ENCODE measurements at regions of chr21 and their contacts with region 1.

Region 1: GRCh38 chr21:15729674-15730483 is at the start of gene USP25:
- DNase-seq: peak; percentile 87
- H3K4me3 Mint-ChIP-seq: peak within 1 kb of the TSS; percentile 90
- H3K27ac Mint-ChIP-seq: peak within 1 kb of the TSS; percentile 92
- H3K4me1 Mint-ChIP-seq: peaks cover 11% of the 10 kb centered on the region
- H3K27me3 Mint-ChIP-seq: no peaks in the 10 kb centered on the region
- CTCF ChIP-seq: no peak
- total RNA-seq, gene USP25: 78.5 and 90.8 TPM in 2 replicates

Region 2: DNA sequence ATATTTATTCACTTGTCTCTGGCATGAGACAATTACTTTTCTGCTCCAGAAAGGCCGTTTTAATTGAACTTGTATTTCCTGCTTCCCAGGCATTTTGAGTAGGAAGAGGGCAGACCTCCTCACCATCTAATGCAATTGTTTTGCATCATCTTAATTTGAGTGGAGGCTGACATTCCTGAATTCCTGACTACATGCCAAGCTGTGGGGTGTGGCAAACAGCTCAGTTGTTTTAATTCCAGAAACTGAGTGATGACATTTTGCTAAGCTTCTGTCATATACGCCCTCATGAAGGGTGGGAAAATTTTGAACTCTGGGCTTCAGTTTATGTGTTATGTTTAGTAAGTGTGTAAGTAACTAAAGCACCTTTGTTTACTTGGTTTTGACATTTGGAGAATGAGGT is 125.5 kb before region 1 on chr21:
- CTCF ChIA-PET with region 1: interaction called, 4 read pairs
- POLR2A ChIA-PET with region 1: no interaction called
- intact Hi-C with region 1: loop called (anchors 2 kb)
- DNase-seq: peak; percentile 91
- H3K4me3 Mint-ChIP-seq: no peak overlapping the region
- H3K27ac Mint-ChIP-seq: peak overlapping the region; percentile 82
- H3K4me1 Mint-ChIP-seq: peaks cover 11% of the 10 kb centered on the region
- H3K27me3 Mint-ChIP-seq: no peaks in the 10 kb centered on the region
- CTCF ChIP-seq: no peak

Region 3: DNA sequence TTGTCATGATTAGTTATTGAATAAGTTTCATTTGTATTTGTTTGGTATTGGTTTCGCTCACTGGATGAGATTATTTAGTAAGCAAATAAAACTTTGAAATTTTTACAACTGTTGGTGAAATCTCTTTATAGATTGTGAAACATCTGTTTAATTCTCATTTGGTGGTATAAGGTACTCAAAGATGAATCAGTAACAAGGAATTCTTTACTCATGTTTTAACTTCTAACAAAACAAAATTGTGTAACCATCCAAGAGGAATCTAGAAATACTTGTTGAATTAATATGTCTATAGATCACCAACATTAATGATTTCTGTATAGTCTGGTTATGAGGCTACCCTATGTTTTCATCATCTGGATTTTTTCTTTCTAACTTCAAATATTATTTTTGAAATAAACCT is 62.9 kb before region 1 on chr21:
- CTCF ChIA-PET with region 1: no interaction called
- POLR2A ChIA-PET with region 1: interaction called, 4 read pairs
- intact Hi-C with region 1: loop called (anchors 5 kb)
- DNase-seq: peak; percentile 66
- H3K4me3 Mint-ChIP-seq: no peak overlapping the region
- H3K27ac Mint-ChIP-seq: peak overlapping the region; percentile 23
- H3K4me1 Mint-ChIP-seq: peaks cover 16% of the 10 kb centered on the region
- H3K27me3 Mint-ChIP-seq: no peaks in the 10 kb centered on the region
- CTCF ChIP-seq: no peak

Region 4: DNA sequence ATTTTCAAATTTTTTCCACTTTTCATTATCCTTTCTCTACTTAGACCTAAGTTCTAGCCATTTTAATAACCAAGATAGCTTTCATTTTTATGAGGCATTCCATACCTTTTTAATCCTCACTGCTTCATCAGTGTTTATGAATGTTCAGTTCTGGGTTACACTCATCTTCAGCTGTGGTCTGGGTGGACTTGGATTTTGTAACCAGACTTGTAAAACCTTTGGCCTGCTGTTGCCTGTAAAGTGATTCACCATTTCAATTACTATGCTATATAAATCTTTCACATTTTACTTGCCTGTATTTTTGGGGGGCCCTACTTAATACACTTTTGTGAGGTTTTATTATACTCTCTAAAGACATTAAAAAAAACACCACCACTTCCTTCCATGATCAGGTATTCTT is 46.1 kb after region 1 on chr21:
- CTCF ChIA-PET with region 1: interaction called, 3 read pairs
- POLR2A ChIA-PET with region 1: interaction called, 16 read pairs
- intact Hi-C with region 1: loop called (anchors 5 kb)
- DNase-seq: peak; percentile 71
- H3K4me3 Mint-ChIP-seq: peak overlapping the region; percentile 52
- H3K27ac Mint-ChIP-seq: peak overlapping the region; percentile 81
- H3K4me1 Mint-ChIP-seq: peaks cover 39% of the 10 kb centered on the region
- H3K27me3 Mint-ChIP-seq: no peaks in the 10 kb centered on the region
- CTCF ChIP-seq: no peak

Region 5: GRCh38 chr21:15793547-15794235 is 63.8 kb after region 1 on chr21:
- CTCF ChIA-PET with region 1: no interaction called
- POLR2A ChIA-PET with region 1: interaction called, 8 read pairs
- intact Hi-C with region 1: loop called (anchors 5 kb)
- DNase-seq: no peak
- H3K4me3 Mint-ChIP-seq: no peak overlapping the region
- H3K27ac Mint-ChIP-seq: peak overlapping the region; percentile 88
- H3K4me1 Mint-ChIP-seq: peaks cover 59% of the 10 kb centered on the region
- H3K27me3 Mint-ChIP-seq: no peaks in the 10 kb centered on the region
- CTCF ChIP-seq: no peak

Region 6: GRCh38 chr21:15826147-15826780 is 96.4 kb after region 1 on chr21:
- CTCF ChIA-PET with region 1: no interaction called
- POLR2A ChIA-PET with region 1: interaction called, 16 read pairs
- intact Hi-C with region 1: loop called (anchors 1 kb)
- DNase-seq: peak; percentile 83
- H3K4me3 Mint-ChIP-seq: no peak overlapping the region
- H3K27ac Mint-ChIP-seq: no peak overlapping the region
- H3K4me1 Mint-ChIP-seq: peaks cover 6% of the 10 kb centered on the region
- H3K27me3 Mint-ChIP-seq: no peaks in the 10 kb centered on the region
- CTCF ChIP-seq: peak; percentile 60

Region 7: DNA sequence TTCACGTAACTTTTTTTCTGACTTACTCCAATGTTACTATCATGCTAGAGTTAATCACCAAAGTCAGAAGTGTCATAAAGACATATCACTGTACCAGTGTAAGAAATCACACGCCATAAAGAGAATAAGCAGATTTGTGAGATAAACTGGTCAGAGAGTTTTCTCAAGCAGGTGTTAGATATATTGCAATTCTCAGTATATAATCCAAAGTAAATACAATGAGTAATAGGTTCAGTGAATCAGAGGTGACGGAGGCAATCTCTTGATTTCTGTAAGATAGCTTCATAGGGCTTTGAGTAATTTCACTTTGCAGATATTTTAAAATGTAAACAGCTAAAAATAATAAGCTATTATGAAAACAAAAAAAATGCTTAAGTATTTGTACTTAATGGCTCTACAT is 118.8 kb after region 1 on chr21:
- CTCF ChIA-PET with region 1: no interaction called
- POLR2A ChIA-PET with region 1: interaction called, 12 read pairs
- intact Hi-C with region 1: no loop called
- DNase-seq: peak; percentile 79
- H3K4me3 Mint-ChIP-seq: no peak overlapping the region
- H3K27ac Mint-ChIP-seq: no peak overlapping the region
- H3K4me1 Mint-ChIP-seq: peaks cover 25% of the 10 kb centered on the region
- H3K27me3 Mint-ChIP-seq: no peaks in the 10 kb centered on the region
- CTCF ChIP-seq: no peak

Region 8: DNA sequence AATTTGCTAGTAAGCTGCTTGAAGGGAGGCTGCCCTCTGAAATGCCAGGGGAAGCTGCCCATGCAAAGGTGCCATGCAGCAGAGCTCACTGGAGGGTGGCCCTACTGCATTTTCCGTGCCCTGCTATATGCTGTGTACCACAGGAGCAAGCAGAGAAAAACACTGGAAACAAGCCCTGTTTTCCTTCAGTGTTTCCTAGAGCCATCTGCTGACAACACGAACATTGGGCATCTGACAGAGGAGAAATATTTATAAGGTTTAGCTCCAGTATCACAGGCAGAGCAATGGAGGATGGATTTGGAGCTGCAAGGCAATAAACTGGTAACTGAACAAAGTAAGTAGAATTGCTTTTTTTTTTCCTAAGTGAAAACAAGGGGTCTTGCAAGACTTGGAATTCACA is 198.3 kb after region 1 on chr21:
- CTCF ChIA-PET with region 1: no interaction called
- POLR2A ChIA-PET with region 1: no interaction called
- intact Hi-C with region 1: no loop called
- DNase-seq: no peak
- H3K4me3 Mint-ChIP-seq: no peak overlapping the region
- H3K27ac Mint-ChIP-seq: no peak overlapping the region
- H3K4me1 Mint-ChIP-seq: no peaks in the 10 kb centered on the region
- H3K27me3 Mint-ChIP-seq: no peaks in the 10 kb centered on the region
- CTCF ChIP-seq: no peak